ENCODE measurements at regions of chr1 and their contacts with region 1.

Region 1: GRCh38 chr1:24930204-24931145 is at the start of gene RUNX3:
- DNase-seq: no peak
- H3K4me3 ChIP-seq: peak within 1 kb of the TSS in 3 of 4 donors; percentile 25 to 44 (median 30)
- H3K27ac ChIP-seq: peak within 1 kb of the TSS in 2 of 4 donors; percentile 34 to 49
- H3K4me1 ChIP-seq: peaks cover 0 to 62% (median 45%) of the 10 kb centered on the region in 4 donors
- H3K27me3 ChIP-seq: peaks cover 66 to 98% (median 92%) of the 10 kb centered on the region in 3 donors
- CTCF ChIP-seq: no peak
- EP300 ChIP-seq: no peak
- POLR2A ChIP-seq: no peak
- total RNA-seq, gene RUNX3: 0.36 to 1.2 (median 0.49) TPM in 3 of 4 donors, not detected in the other

Region 2: DNA sequence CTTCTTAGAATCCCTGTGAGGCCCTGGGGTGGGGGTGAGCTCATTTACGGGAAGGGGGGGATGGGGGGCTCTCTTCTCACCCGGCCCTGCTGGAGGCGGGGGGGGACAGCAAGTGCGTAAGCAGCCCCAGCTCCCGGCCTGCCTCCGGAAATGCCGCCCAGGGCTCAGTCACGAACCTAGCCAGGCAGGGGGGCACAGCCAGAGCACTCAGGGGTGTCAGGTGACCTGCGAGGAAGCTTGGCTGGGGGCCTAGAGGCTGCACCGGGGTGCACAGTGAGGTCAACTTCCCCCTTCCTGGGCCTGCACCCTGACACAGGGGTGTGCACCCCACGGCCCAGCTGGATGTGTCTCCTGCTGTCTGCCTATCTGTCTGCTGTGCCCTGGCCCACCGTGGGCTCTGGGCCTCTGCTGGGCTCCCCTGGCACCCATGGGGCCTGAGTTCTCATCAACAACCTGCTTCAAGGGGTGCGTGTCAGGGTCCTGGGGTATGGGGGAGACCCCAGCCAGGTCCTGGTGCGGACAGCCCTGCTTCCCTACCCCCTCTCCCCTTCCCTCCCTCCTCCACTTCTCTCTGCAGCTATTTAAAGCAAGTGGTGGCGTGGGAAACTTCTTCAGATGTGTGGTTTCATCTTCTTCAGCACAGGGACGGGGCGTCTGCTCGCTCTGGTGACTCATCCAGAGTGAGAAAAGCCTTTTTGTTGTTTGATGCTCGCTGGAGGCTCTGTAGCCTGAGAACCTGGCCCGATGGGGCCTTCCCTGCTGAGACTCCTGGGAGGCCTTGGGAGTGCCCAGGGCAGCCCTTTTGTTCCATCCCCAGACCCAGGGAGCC is 92.1 kb after region 1 on chr1:
- intact Hi-C with region 1: loop called (anchors 5 kb)
- DNase-seq: peak; percentile 83
- H3K4me3 ChIP-seq: no peak overlapping the region
- H3K27ac ChIP-seq: peak overlapping the region in 3 of 4 donors; percentile 35 to 80 (median 68)
- H3K4me1 ChIP-seq: peaks cover 0 to 21% (median 14%) of the 10 kb centered on the region in 4 donors
- H3K27me3 ChIP-seq: no peaks in the 10 kb centered on the region
- CTCF ChIP-seq: no peak
- EP300 ChIP-seq: peak in 2 of 4 donors; percentile 47 to 76
- POLR2A ChIP-seq: no peak

Region 3: GRCh38 chr1:25037174-25038074 is 106.9 kb after region 1 on chr1:
- intact Hi-C with region 1: loop called (anchors 5 kb)
- DNase-seq: no peak
- H3K4me3 ChIP-seq: no peak overlapping the region
- H3K27ac ChIP-seq: no peak overlapping the region
- H3K4me1 ChIP-seq: peaks cover 0 to 5% (median 3%) of the 10 kb centered on the region in 4 donors
- H3K27me3 ChIP-seq: peaks cover 0 to under 1% (median 0%) of the 10 kb centered on the region in 3 donors
- CTCF ChIP-seq: peak in 2 of 4 experiments; percentile 20 to 45
- EP300 ChIP-seq: no peak
- POLR2A ChIP-seq: no peak

Region 4: GRCh38 chr1:25099343-25099951 is 169.0 kb after region 1 on chr1:
- intact Hi-C with region 1: loop called (anchors 5 kb)
- DNase-seq: no peak
- H3K4me3 ChIP-seq: no peak overlapping the region
- H3K27ac ChIP-seq: no peak overlapping the region
- H3K4me1 ChIP-seq: no peaks in the 10 kb centered on the region
- H3K27me3 ChIP-seq: peaks cover 0 to 3% (median 0%) of the 10 kb centered on the region in 3 donors
- CTCF ChIP-seq: no peak
- EP300 ChIP-seq: no peak
- POLR2A ChIP-seq: no peak

Region 5: GRCh38 chr1:25204797-25205480 is 274.5 kb after region 1 on chr1:
- intact Hi-C with region 1: loop called (anchors 10 kb)
- DNase-seq: peak; percentile 41
- H3K4me3 ChIP-seq: no peak overlapping the region
- H3K27ac ChIP-seq: no peak overlapping the region
- H3K4me1 ChIP-seq: peaks cover 0 to 5% (median 0%) of the 10 kb centered on the region in 4 donors
- H3K27me3 ChIP-seq: no peaks in the 10 kb centered on the region
- CTCF ChIP-seq: peak; percentile 14 to 87 (median 50)
- EP300 ChIP-seq: no peak
- POLR2A ChIP-seq: no peak

Measured in sigmoid colon (tissue), 7 donors.